ENCODE measurements at regions of chrX and their contacts with region 1.

Region 1: DNA sequence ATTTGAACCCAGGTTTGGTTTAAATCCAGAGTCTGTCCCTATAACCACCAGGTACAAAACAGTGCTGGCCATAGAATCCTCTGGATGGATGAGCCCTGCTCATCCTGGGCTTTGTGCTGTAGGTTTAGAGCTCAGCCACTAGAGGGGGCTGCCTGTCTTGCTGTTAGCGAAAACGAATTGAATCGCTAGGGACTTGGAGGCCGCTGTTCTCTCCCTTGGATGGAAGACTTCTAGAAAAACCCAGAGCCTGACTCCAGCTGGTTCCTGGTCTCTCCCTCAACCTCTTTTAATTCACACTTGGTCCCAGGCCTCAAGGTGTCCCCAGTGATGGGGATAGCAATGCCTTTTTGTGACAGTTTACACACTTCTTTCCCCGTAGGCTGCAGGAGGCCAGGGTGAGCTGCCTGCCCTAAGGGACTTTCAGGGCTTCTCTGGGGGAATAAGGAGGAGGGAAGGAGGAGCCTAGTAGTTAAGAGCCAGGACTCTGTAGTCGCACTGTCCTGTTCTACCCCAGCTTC is 8.7 kb downstream of the RIPPLY1 start:
- DNase-seq: peak; percentile 63
- H3K4me3 ChIP-seq: no peak overlapping the region
- H3K27ac ChIP-seq: no peak overlapping the region
- H3K4me1 ChIP-seq: peaks cover 19% of the 10 kb centered on the region
- H3K27me3 ChIP-seq: peaks cover 2% of the 10 kb centered on the region
- CTCF ChIP-seq: peak; percentile 93 to 96

Region 2: GRCh38 chrX:106952988-106953387 is 58.5 kb after region 1 on chrX:
- CTCF ChIA-PET with region 1: interaction called, 15 read pairs
- dilution Hi-C with region 1: no loop called
- in situ Hi-C with region 1: loop called in 1 of 2 experiments (anchors 10 kb)
- intact Hi-C with region 1: loop called (anchors 1 kb)
- DNase-seq: no peak
- H3K4me3 ChIP-seq: no peak overlapping the region
- H3K27ac ChIP-seq: no peak overlapping the region
- H3K4me1 ChIP-seq: no peaks in the 10 kb centered on the region
- H3K27me3 ChIP-seq: no peaks in the 10 kb centered on the region
- CTCF ChIP-seq: peak; percentile 39 to 55

Region 3: GRCh38 chrX:107025545-107025944 is 131.1 kb after region 1 on chrX:
- CTCF ChIA-PET with region 1: no interaction called
- dilution Hi-C with region 1: no loop called
- in situ Hi-C with region 1: no loop called
- intact Hi-C with region 1: loop called (anchors 10 kb)
- DNase-seq: peak; percentile 6
- H3K4me3 ChIP-seq: no peak overlapping the region
- H3K27ac ChIP-seq: no peak overlapping the region
- H3K4me1 ChIP-seq: no peaks in the 10 kb centered on the region
- H3K27me3 ChIP-seq: peaks cover 4% of the 10 kb centered on the region
- CTCF ChIP-seq: peak; percentile 54 to 72

Region 4: GRCh38 chrX:107047622-107048021 is 153.2 kb after region 1 on chrX:
- CTCF ChIA-PET with region 1: no interaction called
- dilution Hi-C with region 1: no loop called
- in situ Hi-C with region 1: no loop called
- intact Hi-C with region 1: no loop called
- DNase-seq: no peak
- H3K4me3 ChIP-seq: no peak overlapping the region
- H3K27ac ChIP-seq: no peak overlapping the region
- H3K4me1 ChIP-seq: no peaks in the 10 kb centered on the region
- H3K27me3 ChIP-seq: peaks cover 11% of the 10 kb centered on the region
- CTCF ChIP-seq: no peak

Region 5: GRCh38 chrX:107324499-107325320 is 430.3 kb after region 1 on chrX:
- CTCF ChIA-PET with region 1: no interaction called
- dilution Hi-C with region 1: no loop called
- in situ Hi-C with region 1: no loop called
- intact Hi-C with region 1: loop called (anchors 1 kb)
- DNase-seq: peak; percentile 13
- H3K4me3 ChIP-seq: no peak overlapping the region
- H3K27ac ChIP-seq: no peak overlapping the region
- H3K4me1 ChIP-seq: no peaks in the 10 kb centered on the region
- H3K27me3 ChIP-seq: no peaks in the 10 kb centered on the region
- CTCF ChIP-seq: peak; percentile 15 to 45

Region 6: DNA sequence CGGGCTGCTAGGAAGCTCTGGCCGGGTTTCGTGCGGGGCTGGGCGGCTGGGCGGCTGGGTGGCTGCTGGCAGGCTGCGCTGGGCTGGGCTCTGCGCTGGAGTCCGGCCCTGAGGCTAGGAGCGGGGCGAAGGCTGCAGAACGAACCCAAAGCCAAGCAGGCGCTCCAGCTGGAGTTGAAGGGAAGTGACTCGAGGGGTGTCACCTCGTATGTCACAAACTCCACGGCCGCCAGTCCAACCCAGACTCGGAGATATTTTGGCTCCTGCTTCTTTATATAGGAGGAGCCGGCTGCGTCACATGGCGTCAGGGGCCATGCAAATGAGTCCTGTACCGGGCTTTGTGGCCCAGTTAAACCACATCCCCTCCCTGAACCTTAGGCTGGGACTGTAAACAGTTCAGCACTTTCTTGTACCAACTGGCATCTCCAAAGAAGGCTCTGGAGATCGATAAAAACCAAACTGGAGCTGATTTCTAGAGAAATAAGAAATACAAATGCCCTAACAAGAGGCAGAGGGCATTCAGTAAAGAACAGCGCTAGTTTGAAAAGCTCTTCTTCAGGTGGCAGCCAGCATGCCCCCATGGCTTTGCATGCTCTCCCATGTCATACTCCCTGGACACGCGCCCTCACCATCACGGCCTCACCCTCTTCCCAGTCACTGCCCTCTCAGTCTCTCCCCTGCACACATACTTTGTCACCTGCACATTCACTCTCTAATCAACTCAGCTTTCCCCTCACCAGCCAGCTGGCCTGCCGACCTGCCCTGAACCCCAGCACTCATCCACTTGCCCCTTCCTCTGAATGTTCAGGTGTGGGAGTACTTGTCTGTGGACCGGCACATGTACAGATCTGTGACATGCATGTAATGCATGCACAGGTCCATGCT is 822.6 kb after region 1 on chrX:
- CTCF ChIA-PET with region 1: no interaction called
- dilution Hi-C with region 1: no loop called
- in situ Hi-C with region 1: no loop called
- intact Hi-C with region 1: loop called (anchors 10 kb)
- DNase-seq: peak; percentile 77
- H3K4me3 ChIP-seq: peak overlapping the region; percentile 47 to 68 (median 65)
- H3K27ac ChIP-seq: peak overlapping the region; percentile 85
- H3K4me1 ChIP-seq: peaks cover 13% of the 10 kb centered on the region
- H3K27me3 ChIP-seq: no peaks in the 10 kb centered on the region
- CTCF ChIP-seq: no peak

Measured in mammary epithelial cell (primary cell).